HepG2 (cell line): ENCODE measurements at regions of chr3 and their contacts with region 1.

Region 1: DNA sequence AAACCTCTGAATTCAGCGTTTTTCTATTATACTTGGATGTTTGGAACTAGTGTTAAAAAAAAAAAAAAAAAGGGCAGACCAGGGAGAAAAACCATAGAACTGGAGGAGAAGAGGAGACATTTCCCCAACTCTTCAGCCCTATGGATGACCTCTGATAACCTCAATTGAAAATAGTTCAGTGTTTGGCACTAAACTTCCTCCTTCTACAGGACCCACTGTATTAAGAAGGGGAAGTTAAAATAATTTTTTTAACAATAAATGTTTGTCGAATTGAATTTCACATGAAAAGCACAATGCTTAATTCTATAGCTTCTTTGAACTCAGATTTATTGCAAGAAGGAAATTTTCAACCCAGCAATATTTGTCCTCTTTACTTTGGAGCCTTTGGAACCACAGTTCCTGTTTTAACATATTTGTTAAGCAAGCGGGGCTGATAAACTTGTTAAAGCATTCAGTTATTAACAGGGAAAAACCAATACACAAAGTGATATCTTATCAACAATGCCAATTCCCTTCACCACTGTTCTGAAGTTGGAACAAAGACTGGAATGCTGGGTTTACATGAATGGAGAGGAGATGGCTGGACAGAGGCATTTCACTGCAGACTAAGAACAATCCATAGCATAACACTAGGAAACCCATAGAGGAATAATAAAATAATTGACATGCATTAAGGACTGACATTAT is 3.1 kb upstream of the A4GNT start:
- DNase-seq: no peak
- ATAC-seq: no peak
- H3K4me3 ChIP-seq: no peak overlapping the region
- H3K27ac ChIP-seq: no peak overlapping the region
- H3K4me1 ChIP-seq: 0 out of 2 replicates have a peak, but pooled peaks cover 9% of the 10 kb centered on the region
- H3K27me3 ChIP-seq: no peaks in the 10 kb centered on the region; a peak in 1 of 5 replicates
- CTCF ChIP-seq: no peak
- EP300 ChIP-seq: no peak
- POLR2A ChIP-seq: no peak
- RAD21 ChIP-seq: no peak

Region 2: DNA sequence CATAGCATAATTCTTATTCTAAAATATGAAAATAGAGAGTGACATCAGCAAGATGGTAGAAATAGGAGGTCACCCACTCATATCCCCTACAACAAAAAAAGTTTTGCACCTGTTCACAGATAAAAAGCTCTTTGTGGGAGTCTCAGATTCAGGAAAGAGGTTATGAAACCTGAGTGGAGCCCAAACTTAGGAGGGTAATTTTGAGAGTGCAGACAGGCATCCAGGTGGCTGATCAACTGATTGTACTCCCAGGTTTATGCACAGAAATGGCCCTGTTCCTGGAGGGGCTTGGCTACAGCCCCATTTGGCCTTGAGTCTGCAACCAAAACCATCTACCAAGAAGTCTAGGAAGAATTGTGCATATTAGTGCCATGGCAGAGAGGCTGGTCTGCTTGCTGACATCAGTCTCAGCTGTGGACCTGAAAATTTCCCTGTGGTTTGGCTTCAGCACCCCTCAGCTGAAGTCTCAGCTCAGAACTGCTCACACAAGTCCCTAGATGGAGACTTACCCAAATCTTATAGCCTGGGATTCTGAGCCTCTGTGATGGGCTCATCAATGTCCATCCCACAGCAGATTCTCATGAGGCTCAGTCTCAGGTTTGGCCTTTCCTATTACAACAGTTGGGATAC is 885.9 kb before region 1 on chr3:
- CTCF ChIA-PET with region 1: no interaction called
- POLR2A ChIA-PET with region 1: no interaction called
- in situ Hi-C with region 1: no loop called
- intact Hi-C with region 1: loop called (anchors 5 kb)
- DNase-seq: no peak
- ATAC-seq: no peak
- H3K4me3 ChIP-seq: no peak overlapping the region
- H3K27ac ChIP-seq: no peak overlapping the region
- H3K4me1 ChIP-seq: no peaks in the 10 kb centered on the region
- H3K27me3 ChIP-seq: no peaks in the 10 kb centered on the region
- CTCF ChIP-seq: no peak
- EP300 ChIP-seq: no peak
- POLR2A ChIP-seq: no peak
- RAD21 ChIP-seq: no peak

Region 3: DNA sequence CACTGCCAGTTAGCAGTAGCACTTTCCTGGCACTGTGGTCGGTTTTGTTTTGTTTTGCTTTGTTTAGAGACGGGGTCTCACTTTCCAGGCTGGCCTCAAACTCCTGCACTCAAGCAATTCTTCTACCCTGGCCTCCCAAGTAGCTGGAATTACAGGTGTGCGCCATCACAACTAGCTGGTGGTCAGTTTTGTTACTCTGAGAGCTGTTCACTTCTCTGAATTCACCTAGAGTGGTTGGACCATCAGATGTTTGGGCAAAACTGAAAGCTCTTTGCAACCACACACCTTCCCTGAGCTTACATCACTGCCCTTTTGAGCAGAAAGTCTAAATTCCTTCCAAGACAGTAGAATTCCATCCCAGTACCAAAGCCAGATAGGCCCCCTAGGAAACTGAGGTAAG is 102.7 kb before region 1 on chr3:
- CTCF ChIA-PET with region 1: no interaction called
- POLR2A ChIA-PET with region 1: no interaction called
- in situ Hi-C with region 1: no loop called
- intact Hi-C with region 1: no loop called
- DNase-seq: no peak
- ATAC-seq: no peak
- H3K4me3 ChIP-seq: no peak overlapping the region
- H3K27ac ChIP-seq: no peak overlapping the region
- H3K4me1 ChIP-seq: no peaks in the 10 kb centered on the region
- H3K27me3 ChIP-seq: no peaks in the 10 kb centered on the region; a peak in 1 of 5 replicates
- CTCF ChIP-seq: no peak
- EP300 ChIP-seq: no peak
- POLR2A ChIP-seq: no peak
- RAD21 ChIP-seq: no peak